ENCODE measurements at regions of chr2 and their contacts with region 1.

Region 1: DNA sequence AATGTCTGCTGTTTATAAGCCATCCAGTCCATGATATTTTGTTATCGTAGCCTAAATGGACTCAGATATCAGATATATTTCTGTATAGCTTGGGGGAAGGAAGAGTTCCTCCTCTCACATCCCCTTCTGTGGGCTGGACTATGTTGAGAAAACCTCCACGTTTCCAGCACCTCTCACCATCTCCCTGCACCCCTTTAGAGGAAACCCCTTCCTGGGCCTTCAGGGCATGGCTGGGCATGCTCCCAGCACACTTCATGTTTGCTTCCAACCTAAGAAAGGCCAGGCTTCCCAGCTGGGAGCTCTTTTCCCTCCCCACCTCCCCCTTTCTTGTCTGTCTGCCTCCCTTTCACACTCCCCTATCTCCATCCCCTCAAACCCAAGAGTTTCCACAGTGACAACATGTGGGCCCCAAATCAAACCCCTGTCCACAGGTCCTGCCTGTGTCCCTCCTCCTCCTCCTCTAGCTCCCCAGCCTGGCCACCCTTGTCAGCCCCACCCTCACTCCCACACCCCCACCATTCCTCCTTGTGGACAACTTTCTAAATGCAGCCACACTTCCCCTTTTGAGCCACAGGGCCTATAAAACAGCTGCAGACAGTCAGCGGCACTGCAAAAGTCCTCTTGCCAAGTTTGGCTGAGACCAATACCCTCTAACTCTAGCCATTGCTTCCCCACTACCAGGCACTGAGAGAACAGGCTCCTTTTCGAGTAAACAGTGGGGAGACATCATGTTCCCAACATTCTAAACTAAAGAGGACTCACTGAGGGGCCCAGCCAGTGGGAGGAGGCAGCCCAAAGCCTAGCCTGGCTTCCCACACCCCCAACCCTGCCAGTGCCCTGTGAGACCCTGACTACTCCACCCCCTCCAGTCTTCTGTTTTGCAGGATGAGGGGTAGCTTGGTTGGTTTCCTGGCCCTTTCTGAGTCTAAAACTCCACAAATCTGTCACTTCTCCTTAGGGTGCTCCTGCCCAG is 120.5 kb downstream of the ZFP36L2 start:
- DNase-seq: no peak
- H3K4me3 ChIP-seq: no peak overlapping the region
- H3K27ac ChIP-seq: peak overlapping the region in 51 of 59 donors; percentile 3 to 85 (median 64)
- H3K27me3 ChIP-seq: no peaks in the 10 kb centered on the region
- CTCF ChIP-seq: peak in 1 of 56 donors; percentile 16

Region 2: GRCh38 chr2:43024515-43025011 is 81.3 kb before region 1 on chr2:
- intact Hi-C with region 1: loop called in 1 of 2 experiments (anchors 5 kb)
- DNase-seq: peak in 8 of 10 donors; percentile 47 to 78 (median 69)
- H3K4me3 ChIP-seq: no peak overlapping the region
- H3K27ac ChIP-seq: peak overlapping the region in 51 of 59 donors; percentile 0 to 93 (median 70)
- H3K27me3 ChIP-seq: no peaks in the 10 kb centered on the region
- CTCF ChIP-seq: peak; percentile 56 to 96 (median 83)

Region 3: GRCh38 chr2:43056816-43057741 is 48.8 kb before region 1 on chr2:
- intact Hi-C with region 1: loop called (anchors 2 kb)
- DNase-seq: peak; percentile 80 to 95 (median 86)
- H3K4me3 ChIP-seq: peak overlapping the region in 18 of 59 donors; percentile 1 to 43 (median 12)
- H3K27ac ChIP-seq: peak overlapping the region; percentile 26 to 88 (median 73)
- H3K27me3 ChIP-seq: no peaks in the 10 kb centered on the region
- CTCF ChIP-seq: peak in 3 of 56 donors; percentile 15 to 27 (median 19)

Region 4: DNA sequence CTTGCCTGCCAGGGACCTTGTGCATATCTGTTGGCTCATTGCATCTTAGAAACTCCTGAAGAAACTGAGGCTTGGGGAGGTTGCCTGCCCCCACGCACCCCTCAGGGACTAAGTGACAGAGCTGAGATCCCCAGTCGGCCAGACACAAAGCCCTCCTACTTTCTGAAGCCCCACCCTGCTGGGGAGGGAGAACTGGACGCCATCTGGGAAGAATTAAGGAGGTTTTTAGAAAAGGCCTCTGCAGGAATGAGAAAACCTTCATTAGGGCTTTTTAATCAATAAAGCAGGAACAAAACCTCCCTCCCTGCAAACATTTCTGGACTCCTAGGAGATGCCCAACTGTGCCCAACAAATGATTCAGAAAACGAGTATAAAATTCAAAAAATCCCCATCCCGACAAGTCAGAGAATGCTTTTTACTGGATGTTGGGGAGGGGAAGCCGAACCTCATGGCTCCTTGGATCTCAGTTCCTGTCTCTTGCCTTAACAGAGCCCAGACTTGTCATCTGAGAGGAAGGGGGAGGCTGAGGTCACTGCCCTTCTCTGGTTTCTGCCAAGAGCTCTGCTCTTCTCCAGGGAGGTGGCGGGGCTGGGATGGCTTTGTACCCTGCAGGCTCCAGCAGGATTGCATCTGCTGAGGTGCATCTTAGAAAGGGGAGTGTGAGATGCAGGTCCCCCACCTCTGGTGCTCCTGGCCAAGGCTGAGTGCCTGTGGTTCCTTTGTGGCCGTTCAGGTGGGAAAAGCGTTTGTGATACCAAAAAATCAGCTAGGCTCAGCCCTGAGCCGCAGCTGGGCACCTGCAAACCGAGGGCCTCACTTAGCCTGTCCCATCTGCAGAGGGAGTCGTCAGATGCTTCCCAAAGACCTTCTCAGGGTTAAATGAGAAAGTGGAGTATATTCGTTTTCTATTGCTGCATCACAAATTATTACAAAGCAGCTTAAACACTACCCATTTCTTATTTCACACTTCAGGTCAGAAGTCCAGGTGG is 21.9 kb before region 1 on chr2:
- intact Hi-C with region 1: loop called in 1 of 2 experiments (anchors 2 kb)
- DNase-seq: peak in 4 of 10 donors; percentile 48 to 66 (median 65)
- H3K4me3 ChIP-seq: no peak overlapping the region
- H3K27ac ChIP-seq: peak overlapping the region in 52 of 59 donors; percentile 1 to 87 (median 52)
- H3K27me3 ChIP-seq: no peaks in the 10 kb centered on the region
- CTCF ChIP-seq: no peak

Region 5: GRCh38 chr2:43127208-43127940 is 21.5 kb after region 1 on chr2:
- intact Hi-C with region 1: no loop called
- DNase-seq: peak in 1 of 10 donors; percentile 52
- H3K4me3 ChIP-seq: no peak overlapping the region
- H3K27ac ChIP-seq: peak overlapping the region in 12 of 59 donors; percentile 2 to 75 (median 47)
- H3K27me3 ChIP-seq: no peaks in the 10 kb centered on the region
- CTCF ChIP-seq: peak in 40 of 56 donors; percentile 7 to 47 (median 28)

Region 6: DNA sequence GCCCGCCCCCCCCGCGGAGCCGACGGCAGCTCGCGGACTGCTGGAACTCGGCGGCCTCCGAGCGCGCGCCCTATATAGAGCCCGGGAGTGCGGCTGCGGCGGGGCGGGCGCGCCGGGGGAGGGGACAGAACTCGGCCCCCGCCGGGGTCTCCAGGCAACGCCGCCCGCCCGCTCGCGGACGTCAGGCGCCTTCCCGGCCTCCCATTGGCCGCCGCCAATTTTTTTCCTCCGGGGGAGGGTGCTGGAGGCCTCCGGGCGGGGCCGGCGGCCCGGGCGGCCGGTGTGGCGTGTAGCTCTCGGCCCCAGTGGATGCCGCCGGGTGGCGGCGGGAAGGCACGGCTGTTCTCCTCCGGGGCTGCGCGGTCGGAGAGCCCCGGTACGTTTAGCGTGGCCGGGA is 120.7 kb after region 1 on chr2 and contains the start of gene ZFP36L2:
- intact Hi-C with region 1: loop called (anchors 1 kb)
- DNase-seq: peak; percentile 71 to 98 (median 94)
- H3K4me3 ChIP-seq: peak within 1 kb of the TSS; percentile 51 to 93 (median 79)
- H3K27ac ChIP-seq: peak within 1 kb of the TSS; percentile 89 to 100 (median 98)
- H3K27me3 ChIP-seq: peaks cover 0 to 19% (median 0%) of the 10 kb centered on the region in 45 donors
- CTCF ChIP-seq: peak in 8 of 56 donors; percentile 4 to 26 (median 18)
- total RNA-seq, gene ZFP36L2: 13.0 to 86.0 (median 32.4) TPM

Region 7: DNA sequence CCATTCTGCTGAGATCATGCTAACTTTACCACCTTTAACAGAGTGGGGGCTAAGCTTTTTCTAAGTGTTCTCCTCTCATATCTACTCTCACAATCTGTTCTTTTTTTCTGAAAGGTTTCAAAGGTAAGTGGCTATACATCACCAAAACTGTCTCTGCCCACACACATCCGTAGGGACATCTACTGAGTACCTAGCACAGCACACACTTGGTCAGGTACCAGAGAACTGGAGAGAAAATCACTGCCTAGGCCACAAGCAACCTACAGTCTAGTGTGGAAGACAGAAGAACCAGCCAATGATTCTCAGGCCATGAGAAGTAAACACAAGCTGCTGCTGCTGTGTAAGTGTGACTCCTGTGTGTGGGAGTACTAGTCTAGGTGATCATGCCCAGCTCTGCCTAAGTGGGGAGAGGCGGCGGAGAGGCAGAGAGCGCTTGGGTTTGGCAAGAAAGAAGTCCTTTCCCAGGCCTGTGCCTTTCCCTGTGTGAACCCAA is 296.6 kb after region 1 on chr2:
- intact Hi-C with region 1: no loop called
- DNase-seq: peak in 8 of 10 donors; percentile 9 to 70 (median 54)
- H3K4me3 ChIP-seq: no peak overlapping the region
- H3K27ac ChIP-seq: peak overlapping the region in 17 of 59 donors; percentile 5 to 60 (median 26)
- H3K27me3 ChIP-seq: no peaks in the 10 kb centered on the region
- CTCF ChIP-seq: no peak

Measured in dorsolateral prefrontal cortex (tissue), 120 donors.